ENCODE measurements at regions of chr2 and their contacts with region 1.

Region 1: DNA sequence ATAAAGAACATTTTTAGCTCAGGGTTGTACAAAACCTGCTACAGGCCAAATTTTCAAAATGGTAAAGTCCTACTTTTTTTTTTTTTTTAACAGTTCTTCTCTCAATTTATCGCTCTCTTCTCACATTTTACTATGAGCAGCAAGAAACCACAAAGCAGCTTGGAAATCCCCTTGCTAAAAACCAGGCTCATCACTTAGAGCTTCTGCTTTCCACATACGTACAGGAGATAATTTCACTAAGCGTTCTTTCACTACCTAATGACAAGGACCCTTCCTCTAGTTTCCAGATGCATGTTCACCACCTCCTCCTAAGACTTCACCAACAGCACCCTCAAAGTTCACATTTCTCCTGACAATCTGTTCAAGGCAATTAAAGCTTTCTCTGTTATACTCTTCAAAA is 294.9 kb upstream of the CYRIA start:
- DNase-seq: no peak
- H3K4me3 ChIP-seq: no peak overlapping the region
- H3K27ac ChIP-seq: no peak overlapping the region
- H3K4me1 ChIP-seq: no peaks in the 10 kb centered on the region
- H3K27me3 ChIP-seq: no peaks in the 10 kb centered on the region
- CTCF ChIP-seq: no peak
- POLR2A ChIP-seq: no peak

Region 2: DNA sequence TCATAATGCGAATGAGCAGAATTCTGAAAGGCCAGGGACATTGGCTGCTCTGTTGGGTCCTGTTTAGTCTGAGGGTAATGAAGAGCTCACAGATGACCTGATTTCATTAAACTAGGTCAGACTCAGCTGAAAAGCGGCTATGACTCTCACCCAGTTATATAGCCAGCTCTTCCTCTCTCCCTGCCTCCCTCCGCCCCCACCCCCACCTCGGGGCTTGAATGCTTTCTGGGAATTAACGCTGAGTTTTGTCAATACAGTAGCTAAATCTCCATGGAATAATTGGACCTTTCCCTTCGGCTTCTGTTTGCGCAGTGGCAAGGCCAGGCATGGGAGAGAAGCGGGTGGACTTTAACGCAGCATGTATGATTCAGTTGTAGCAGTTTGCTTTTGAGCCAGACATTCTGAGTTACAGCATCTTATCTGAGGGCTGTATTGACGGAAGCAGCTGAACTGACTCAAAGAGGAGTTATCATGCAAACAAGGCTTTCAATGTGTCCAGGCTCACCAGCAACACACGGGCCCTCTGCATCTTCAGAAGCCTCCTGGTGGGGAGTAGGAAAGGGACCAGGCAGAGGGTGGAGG is 909.6 kb before region 1 on chr2:
- intact Hi-C with region 1: loop called (anchors 5 kb)
- DNase-seq: no peak
- H3K4me3 ChIP-seq: no peak overlapping the region
- H3K27ac ChIP-seq: no peak overlapping the region
- H3K4me1 ChIP-seq: no peaks in the 10 kb centered on the region
- H3K27me3 ChIP-seq: no peaks in the 10 kb centered on the region
- CTCF ChIP-seq: no peak
- POLR2A ChIP-seq: no peak